Activated T-helper 1 cell treated with anti-CD3 and anti-CD28 coated beads, Interleukin-12 subunit alpha, Interleukin-12 subunit beta, Interleukin-2, Interleukin-4 antibody, amounts not matched to agents 30 ng/mL and 10 ng/mL and 1 ng/mL, durations not matched to agents 14 hours and 24 hours and 36 hours (primary cell): ENCODE measurements at regions of chr6 and their contacts with region 1.

Region 1: DNA sequence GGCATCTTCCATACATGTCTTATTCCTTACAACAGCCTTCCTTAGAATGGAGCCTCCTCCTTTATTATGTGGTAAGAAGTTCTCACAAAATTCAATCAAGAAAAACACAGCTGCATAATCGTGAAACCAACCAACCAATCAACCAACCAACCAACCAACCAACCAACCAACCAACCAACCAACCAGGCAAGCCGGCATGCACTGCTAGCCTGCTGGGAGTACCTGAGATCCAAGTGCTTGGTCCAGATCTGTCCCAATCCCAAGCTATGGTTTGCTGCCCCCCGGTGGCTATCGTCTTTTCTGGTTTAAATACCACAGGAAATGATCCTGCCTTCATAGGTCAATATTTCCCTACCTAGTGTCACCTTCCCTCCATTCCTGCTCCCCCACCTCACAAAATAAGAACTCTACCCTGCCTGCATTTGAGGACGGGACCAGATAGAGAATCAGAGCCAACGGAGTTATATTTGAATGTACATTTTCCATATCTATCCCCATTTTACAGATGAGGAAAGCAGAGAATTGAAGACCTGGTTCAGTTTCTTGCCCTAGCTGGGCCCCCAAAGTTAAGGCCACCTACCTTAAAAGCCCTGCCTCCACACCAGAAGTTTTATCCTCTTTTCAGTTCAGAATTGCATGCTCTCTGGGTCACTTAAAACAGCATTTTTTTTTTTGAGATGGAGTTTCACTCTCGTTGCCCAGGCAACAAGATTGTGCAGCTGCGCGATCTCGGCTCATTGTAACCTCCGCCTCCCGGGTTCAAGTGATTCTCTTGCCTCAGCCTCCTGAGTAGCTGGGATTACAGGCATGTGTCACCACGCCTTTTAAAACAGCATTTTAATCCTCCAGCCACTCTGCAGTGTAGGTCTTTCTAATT is 27.1 kb downstream of the RAB44 start:
- DNase-seq: peak; percentile 13
- H3K4me3 Mint-ChIP-seq: no peak overlapping the region
- H3K27ac Mint-ChIP-seq: no peak overlapping the region
- H3K4me1 Mint-ChIP-seq: peaks cover 47% of the 10 kb centered on the region
- H3K27me3 Mint-ChIP-seq: no peaks in the 10 kb centered on the region

Region 2: DNA sequence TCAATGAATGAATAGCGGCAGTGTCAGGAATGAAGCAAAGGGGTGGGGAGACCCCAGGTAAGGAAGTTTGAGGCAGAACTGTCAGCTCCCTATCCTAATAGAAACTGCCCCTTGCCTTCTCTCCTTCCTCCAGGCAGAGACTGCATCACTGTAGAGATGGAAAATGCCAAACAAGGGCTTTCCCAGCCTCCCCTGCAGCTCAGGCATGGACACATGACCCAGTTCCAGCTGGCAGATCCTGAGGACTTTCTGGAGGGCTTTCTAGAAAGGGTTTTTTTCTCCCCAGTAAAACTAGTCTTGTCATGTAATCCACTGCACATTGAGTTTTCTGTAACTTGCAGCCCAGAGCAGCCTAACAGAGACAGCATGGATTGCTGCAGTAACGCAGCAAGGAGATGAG is 472.7 kb before region 1 on chr6:
- intact Hi-C with region 1: no loop called
- DNase-seq: no peak
- H3K4me3 Mint-ChIP-seq: no peak overlapping the region
- H3K27ac Mint-ChIP-seq: no peak overlapping the region
- H3K4me1 Mint-ChIP-seq: no peaks in the 10 kb centered on the region
- H3K27me3 Mint-ChIP-seq: peaks cover 16% of the 10 kb centered on the region

Region 3: GRCh38 chr6:36697481-36697903 is 27.3 kb before region 1 on chr6 and contains the start of gene RAB44:
- intact Hi-C with region 1: loop called (anchors 2 kb)
- DNase-seq: no peak
- H3K4me3 Mint-ChIP-seq: no peak within 1 kb of the TSS
- H3K27ac Mint-ChIP-seq: peak within 1 kb of the TSS; percentile 63
- H3K4me1 Mint-ChIP-seq: peaks cover 52% of the 10 kb centered on the region
- H3K27me3 Mint-ChIP-seq: no peaks in the 10 kb centered on the region
- total RNA-seq, gene RAB44: 0.05 and 0.10 TPM in 2 replicates

Region 4: GRCh38 chr6:36735110-36736071 is 10.6 kb after region 1 on chr6:
- intact Hi-C with region 1: no loop called
- DNase-seq: peak; percentile 54
- H3K4me3 Mint-ChIP-seq: peak overlapping the region; percentile 67
- H3K27ac Mint-ChIP-seq: peak overlapping the region; percentile 89
- H3K4me1 Mint-ChIP-seq: peaks cover 41% of the 10 kb centered on the region
- H3K27me3 Mint-ChIP-seq: no peaks in the 10 kb centered on the region

Region 5: GRCh38 chr6:36765594-36766398 is 41.0 kb after region 1 on chr6:
- intact Hi-C with region 1: no loop called
- DNase-seq: peak; percentile 79
- H3K4me3 Mint-ChIP-seq: no peak overlapping the region
- H3K27ac Mint-ChIP-seq: no peak overlapping the region
- H3K4me1 Mint-ChIP-seq: peaks cover 39% of the 10 kb centered on the region
- H3K27me3 Mint-ChIP-seq: no peaks in the 10 kb centered on the region